ENCODE measurements at regions of chr13 and their contacts with region 1.

Region 1: DNA sequence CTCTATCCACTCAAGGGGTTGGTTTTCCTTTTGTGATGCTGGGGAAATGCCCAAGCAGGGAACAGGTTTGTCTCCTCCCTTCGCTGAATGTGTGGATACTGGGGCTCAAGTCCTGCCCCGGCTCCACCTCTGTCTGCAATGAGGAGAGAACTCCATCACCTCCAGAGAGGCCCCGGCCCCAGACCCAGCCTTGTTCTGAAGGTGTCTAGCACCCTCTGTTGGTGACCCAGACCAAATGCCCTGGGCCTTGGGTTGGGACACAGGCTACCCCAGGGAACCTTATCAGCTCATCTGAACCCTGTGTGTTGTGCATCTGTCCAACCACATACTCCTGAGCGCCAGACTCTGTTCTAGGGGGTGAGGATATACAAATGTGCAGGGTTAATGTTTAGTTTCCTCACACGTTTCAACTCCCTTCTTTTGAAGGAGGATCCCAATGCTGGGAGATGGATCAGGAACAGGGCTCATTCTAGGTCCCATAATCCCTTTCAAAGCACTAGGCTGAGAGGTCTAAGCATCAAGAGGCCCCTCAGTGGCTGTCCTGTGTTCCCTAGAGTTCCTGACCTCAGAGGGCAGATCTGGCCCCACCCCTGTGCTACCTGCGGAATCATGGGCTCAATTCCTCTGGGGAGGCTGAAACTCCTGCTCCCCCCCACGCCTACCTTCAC is 112.5 kb upstream of the SLC7A1 start:
- DNase-seq: peak; percentile 49
- ATAC-seq: peak; percentile 75

Region 2: GRCh38 chr13:29508130-29508875 is 199.7 kb before region 1 on chr13:
- intact Hi-C with region 1: loop called (anchors 5 kb)
- DNase-seq: peak; percentile 91
- ATAC-seq: peak; percentile 86

Region 3: DNA sequence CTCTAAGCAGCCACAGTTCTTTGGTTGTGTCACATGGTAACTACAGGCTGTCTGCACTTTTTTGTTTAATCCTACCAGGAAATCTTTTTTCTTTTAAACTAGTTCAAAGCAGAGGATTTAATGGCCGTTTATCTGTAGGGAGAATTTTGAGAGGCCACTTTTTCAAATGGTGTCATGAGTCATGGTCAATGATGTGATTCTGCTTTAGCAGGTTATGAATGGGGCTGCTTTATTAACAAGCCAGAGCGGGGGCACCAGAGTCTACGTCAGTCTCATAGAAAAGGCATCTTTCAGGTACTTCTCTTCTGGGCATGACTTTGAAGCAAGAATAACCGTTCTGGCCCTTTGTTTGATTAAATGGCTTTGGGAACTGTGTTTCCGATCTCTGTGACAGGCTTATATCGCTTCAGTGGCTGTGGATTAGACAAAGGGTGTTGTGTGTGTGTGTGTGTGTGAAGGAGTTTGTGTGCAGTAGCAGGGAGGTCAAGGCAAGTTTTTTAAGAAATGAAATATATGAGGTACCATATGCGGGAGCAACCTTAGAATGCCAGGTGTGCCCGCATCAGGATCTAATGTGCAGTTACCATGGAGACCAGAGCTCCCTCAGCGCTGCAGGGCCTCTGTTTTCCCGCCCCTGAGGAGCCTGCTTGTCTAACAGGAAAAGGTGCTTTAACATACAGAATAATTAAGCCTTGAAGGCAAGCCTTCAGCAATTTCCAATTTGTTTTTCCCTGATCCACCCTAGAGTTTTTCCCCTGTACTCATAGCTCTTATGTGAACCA is 478.8 kb after region 1 on chr13:
- intact Hi-C with region 1: no loop called
- DNase-seq: no peak
- ATAC-seq: no peak